Testis (tissue), 5 donors: ENCODE measurements at regions of chr1 and their contacts with region 1.

Region 1: DNA sequence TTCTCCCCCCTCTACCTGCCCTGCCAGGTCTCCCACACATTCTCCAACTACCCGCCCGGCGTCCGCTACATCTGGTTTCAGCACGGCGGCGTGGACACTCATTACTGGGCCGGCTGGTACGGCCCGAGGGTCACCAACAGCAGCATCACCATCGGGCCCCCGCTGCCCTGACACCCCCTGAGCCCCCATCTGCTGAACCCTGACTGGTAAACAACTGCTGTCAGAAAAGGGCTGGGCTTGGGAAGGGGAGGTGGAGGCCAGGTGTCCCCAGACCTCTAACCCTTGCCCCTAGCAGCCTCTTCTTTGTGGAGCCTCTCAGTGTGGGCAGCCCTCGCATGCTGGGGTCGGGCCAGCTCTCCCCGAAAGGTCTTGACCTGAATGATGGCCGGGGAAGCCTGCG is 2.9 kb upstream of the FBXO6 start:
- DNase-seq: no peak
- H3K4me3 ChIP-seq: no peak overlapping the region
- H3K27ac ChIP-seq: no peak overlapping the region
- H3K4me1 ChIP-seq: no peaks in the 10 kb centered on the region
- H3K27me3 ChIP-seq: no peaks in the 10 kb centered on the region
- CTCF ChIP-seq: no peak
- POLR2A ChIP-seq: no peak

Region 2: DNA sequence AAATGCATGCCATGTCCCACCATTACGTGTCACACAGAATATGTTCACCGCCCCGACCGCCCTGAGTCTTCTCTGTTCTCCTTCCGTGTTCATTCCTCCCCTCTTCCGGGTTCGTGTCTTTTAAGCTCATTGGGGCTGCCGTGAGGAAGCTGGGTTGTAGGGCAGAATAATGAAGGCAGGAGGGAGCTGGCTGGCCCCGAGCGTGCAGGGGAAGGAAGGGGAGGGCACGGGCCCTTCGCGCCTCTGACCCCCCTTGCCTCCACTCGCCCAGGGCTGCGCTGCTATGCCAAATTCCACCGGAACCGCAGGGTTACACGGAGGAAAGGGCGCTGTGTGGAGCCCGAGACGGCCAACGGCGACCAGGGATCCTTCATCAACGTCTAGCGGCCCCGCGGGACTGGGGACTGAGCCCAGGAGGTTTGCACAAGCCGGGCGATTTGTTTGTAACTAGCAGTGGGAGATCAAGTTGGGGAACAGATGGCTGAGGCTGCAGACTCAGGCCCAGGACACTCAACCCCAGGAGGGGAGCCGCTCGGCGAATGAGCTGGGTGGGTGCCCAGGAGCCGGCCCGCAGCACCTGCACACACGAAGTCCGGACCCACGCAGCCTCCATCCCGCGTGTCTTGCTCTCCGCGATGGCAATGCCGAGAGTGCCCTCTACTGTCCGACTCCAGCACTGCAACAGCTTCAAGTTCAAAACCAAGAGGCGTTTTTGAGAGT is 58.4 kb after region 1 on chr1:
- intact Hi-C with region 1: loop called (anchors 5 kb)
- DNase-seq: peak; percentile 93
- H3K4me3 ChIP-seq: peak overlapping the region; percentile 29 to 30
- H3K27ac ChIP-seq: no peak overlapping the region
- H3K4me1 ChIP-seq: peaks cover 24% of the 10 kb centered on the region
- H3K27me3 ChIP-seq: no peaks in the 10 kb centered on the region
- CTCF ChIP-seq: peak; percentile 79 to 94 (median 91)
- POLR2A ChIP-seq: no peak